ENCODE measurements at regions of chr15 and their contacts with region 1.

Region 1: GRCh38 chr15:32669896-32670619 is 28.5 kb downstream of the SCG5 start:
- DNase-seq: no peak
- ATAC-seq: peak in 1 of 2 experiments; percentile 56; a peak in 3 of 6 replicates
- H3K4me3 ChIP-seq: no peak overlapping the region
- H3K27ac ChIP-seq: peak overlapping the region; percentile 4 to 13; a peak in 3 of 6 replicates
- H3K4me1 ChIP-seq: peaks cover 22% of the 10 kb centered on the region; the same call in 2 of the 3 replicates
- CTCF ChIP-seq: no peak
- EP300 ChIP-seq: no peak
- POLR2A ChIP-seq: no peak
- RAD21 ChIP-seq: no peak

Region 2: DNA sequence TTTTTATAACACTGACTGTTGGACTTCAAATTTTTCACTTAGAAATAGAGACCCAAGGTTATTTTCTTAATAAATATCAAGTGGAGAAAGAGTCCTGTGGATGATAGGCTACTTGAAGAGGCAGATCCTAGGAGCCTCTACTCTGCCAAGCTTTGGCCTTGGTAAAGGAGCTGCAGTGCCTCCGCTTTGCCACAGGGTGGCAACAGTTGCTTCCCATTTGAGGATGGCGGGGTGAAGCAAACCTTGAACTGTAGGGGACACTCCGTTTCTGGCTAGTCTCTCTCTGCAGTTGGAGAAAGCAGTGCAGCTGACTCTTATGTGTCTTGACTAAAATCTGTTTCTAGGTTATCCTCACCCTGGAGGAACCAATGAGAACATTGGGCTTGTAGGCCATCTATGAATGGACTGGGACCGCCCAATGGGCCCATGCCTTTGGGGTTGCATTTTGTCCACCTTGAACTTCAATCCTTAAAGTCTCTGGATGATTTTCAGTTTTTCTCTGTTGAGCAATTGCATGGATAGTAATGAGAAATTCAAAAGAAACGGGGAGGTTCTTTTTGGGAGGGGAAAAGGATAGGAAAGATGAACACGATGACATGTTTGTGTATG is 18.7 kb before region 1 on chr15:
- CTCF ChIA-PET with region 1: interaction called, 106 read pairs
- POLR2A ChIA-PET with region 1: no interaction called
- DNase-seq: peak; percentile 76 to 80
- ATAC-seq: peak; percentile 92 to 96
- H3K4me3 ChIP-seq: no peak overlapping the region
- H3K27ac ChIP-seq: peak overlapping the region in 1 of 2 experiments; percentile 9; a peak in 2 of 6 replicates
- H3K4me1 ChIP-seq: peaks cover 7% of the 10 kb centered on the region; the same call in 1 of the 3 replicates
- CTCF ChIP-seq: peak; percentile 88
- EP300 ChIP-seq: no peak
- POLR2A ChIP-seq: no peak
- RAD21 ChIP-seq: peak; percentile 88 to 92

Region 3: GRCh38 chr15:32683906-32684584 is 14.0 kb after region 1 on chr15:
- CTCF ChIA-PET with region 1: interaction called, 29 read pairs
- POLR2A ChIA-PET with region 1: no interaction called
- DNase-seq: peak in 1 of 2 experiments; percentile 30
- ATAC-seq: peak in 1 of 2 experiments; percentile 23; a peak in 1 of 6 replicates
- H3K4me3 ChIP-seq: no peak overlapping the region
- H3K27ac ChIP-seq: peak overlapping the region; percentile 57 to 61; a peak in 5 of 6 replicates
- H3K4me1 ChIP-seq: peaks cover 54% of the 10 kb centered on the region
- CTCF ChIP-seq: no peak
- EP300 ChIP-seq: no peak
- POLR2A ChIP-seq: no peak
- RAD21 ChIP-seq: no peak

Region 4: DNA sequence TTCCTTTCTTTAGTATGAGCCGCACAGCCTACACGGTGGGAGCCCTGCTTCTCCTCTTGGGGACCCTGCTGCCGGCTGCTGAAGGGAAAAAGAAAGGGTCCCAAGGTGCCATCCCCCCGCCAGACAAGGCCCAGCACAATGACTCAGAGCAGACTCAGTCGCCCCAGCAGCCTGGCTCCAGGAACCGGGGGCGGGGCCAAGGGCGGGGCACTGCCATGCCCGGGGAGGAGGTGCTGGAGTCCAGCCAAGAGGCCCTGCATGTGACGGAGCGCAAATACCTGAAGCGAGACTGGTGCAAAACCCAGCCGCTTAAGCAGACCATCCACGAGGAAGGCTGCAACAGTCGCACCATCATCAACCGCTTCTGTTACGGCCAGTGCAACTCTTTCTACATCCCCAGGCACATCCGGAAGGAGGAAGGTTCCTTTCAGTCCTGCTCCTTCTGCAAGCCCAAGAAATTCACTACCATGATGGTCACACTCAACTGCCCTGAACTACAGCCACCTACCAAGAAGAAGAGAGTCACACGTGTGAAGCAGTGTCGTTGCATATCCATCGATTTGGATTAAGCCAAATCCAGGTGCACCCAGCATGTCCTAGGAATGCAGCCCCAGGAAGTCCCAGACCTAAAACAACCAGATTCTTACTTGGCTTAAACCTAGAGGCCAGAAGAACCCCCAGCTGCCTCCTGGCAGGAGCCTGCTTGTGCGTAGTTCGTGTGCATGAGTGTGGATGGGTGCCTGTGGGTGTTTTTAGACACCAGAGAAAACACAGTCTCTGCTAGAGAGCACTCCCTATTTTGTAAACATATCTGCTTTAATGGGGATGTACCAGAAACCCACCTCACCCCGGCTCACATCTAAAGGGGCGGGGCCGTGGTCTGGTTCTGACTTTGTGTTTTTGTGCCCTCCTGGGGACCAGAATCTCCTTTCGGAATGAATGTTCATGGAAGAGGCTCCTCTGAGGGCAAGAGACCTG is 60.9 kb after region 1 on chr15:
- CTCF ChIA-PET with region 1: no interaction called
- POLR2A ChIA-PET with region 1: no interaction called
- DNase-seq: no peak
- ATAC-seq: no peak
- H3K4me3 ChIP-seq: no peak overlapping the region
- H3K27ac ChIP-seq: no peak overlapping the region
- H3K4me1 ChIP-seq: no peaks in the 10 kb centered on the region
- CTCF ChIP-seq: no peak
- EP300 ChIP-seq: no peak
- POLR2A ChIP-seq: no peak
- RAD21 ChIP-seq: no peak

Region 5: DNA sequence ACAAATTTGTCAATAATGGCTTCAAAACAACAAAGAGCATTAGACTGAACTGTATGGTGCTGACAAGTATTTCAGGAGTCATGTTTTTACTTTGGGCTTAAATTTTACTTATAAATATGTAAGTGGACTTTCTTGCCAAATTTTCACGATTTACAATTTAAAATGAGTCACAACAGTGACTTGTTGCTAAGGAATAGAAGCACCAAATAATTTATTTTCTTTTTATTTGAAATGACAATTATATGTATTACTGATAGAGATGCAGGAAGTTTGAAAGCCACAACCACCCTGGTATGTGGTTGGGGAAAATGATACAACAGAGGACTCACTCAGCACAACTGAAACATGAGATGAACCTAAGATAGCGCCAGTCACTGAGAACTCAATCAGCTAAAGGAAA is 434.2 kb after region 1 on chr15:
- CTCF ChIA-PET with region 1: no interaction called
- POLR2A ChIA-PET with region 1: no interaction called
- DNase-seq: no peak
- ATAC-seq: no peak
- H3K4me3 ChIP-seq: no peak overlapping the region
- H3K27ac ChIP-seq: no peak overlapping the region
- H3K4me1 ChIP-seq: no peaks in the 10 kb centered on the region
- CTCF ChIP-seq: no peak
- EP300 ChIP-seq: no peak
- POLR2A ChIP-seq: no peak
- RAD21 ChIP-seq: no peak

Measured in A549 (cell line).